ENCODE measurements at regions of chr10 and their contacts with region 1.

Region 1: GRCh38 chr10:80289451-80290287 is at the start of gene MAT1A:
- DNase-seq: no peak
- H3K4me3 ChIP-seq: no peak within 1 kb of the TSS
- H3K27ac ChIP-seq: no peak within 1 kb of the TSS
- H3K4me1 ChIP-seq: no peaks in the 10 kb centered on the region
- H3K27me3 ChIP-seq: no peaks in the 10 kb centered on the region
- CTCF ChIP-seq: no peak
- EP300 ChIP-seq: no peak
- POLR2A ChIP-seq: no peak
- total RNA-seq, gene MAT1A: not detected

Region 2: GRCh38 chr10:80794986-80795385 is 505.3 kb after region 1 on chr10:
- intact Hi-C with region 1: loop called (anchors 10 kb)
- DNase-seq: no peak
- H3K4me3 ChIP-seq: no peak overlapping the region
- H3K27ac ChIP-seq: no peak overlapping the region
- H3K4me1 ChIP-seq: no peaks in the 10 kb centered on the region
- H3K27me3 ChIP-seq: no peaks in the 10 kb centered on the region
- CTCF ChIP-seq: no peak
- EP300 ChIP-seq: no peak
- POLR2A ChIP-seq: no peak

Region 3: GRCh38 chr10:80814147-80814652 is 524.5 kb after region 1 on chr10:
- intact Hi-C with region 1: no loop called
- DNase-seq: no peak
- H3K4me3 ChIP-seq: no peak overlapping the region
- H3K27ac ChIP-seq: no peak overlapping the region
- H3K4me1 ChIP-seq: no peaks in the 10 kb centered on the region
- H3K27me3 ChIP-seq: no peaks in the 10 kb centered on the region
- CTCF ChIP-seq: no peak
- EP300 ChIP-seq: no peak
- POLR2A ChIP-seq: no peak